ENCODE measurements at regions of chr1 and their contacts with region 1.

Region 1: DNA sequence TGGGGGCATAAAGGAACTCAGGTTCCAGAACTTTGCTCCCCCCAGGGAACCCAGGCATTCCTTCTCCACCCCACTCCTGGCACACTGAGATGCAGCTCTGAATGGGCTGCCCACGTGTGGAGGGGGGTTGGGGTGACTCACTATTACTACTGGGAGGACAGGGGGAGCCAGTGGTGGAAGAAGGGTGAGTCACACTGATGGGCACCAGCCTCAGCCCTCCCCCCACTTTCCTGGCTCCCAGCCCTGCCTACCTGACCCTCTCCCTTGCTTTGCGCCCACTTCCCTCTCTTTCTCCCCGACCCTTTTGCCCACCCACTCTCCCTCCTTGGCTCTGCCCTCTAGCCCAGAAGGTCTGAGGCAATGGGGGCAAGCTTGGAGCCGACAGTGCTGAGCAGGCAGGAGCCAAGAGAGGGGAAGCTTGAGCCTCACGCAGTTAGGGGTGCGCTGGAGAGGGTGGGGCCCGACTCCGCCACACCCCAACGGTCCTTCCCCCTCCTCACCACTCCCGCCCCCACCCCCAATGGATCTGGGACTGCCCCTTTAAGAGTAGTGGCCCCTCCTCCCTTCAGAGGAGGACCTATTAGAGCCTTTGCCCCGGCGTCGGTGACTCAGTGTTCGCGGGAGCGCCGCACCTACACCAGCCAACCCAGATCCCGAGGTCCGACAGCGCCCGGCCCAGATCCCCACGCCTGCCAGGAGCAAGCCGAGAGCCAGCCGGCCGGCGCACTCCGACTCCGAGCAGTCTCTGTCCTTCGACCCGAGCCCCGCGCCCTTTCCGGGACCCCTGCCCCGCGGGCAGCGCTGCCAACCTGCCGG is at the start of gene LMNA:
- DNase-seq: peak; percentile 92
- H3K4me3 Mint-ChIP-seq: peak within 1 kb of the TSS; percentile 93
- H3K27ac Mint-ChIP-seq: peak within 1 kb of the TSS; percentile 87
- H3K4me1 Mint-ChIP-seq: peaks cover 23% of the 10 kb centered on the region
- H3K27me3 Mint-ChIP-seq: no peaks in the 10 kb centered on the region
- total RNA-seq, gene LMNA: 210 to 211 TPM

Region 2: GRCh38 chr1:155801149-155801548 is 313.2 kb before region 1 on chr1:
- CTCF ChIA-PET with region 1: no interaction called
- POLR2A ChIA-PET with region 1: no interaction called
- intact Hi-C with region 1: no loop called
- DNase-seq: no peak
- H3K4me3 Mint-ChIP-seq: no peak overlapping the region
- H3K27ac Mint-ChIP-seq: peak overlapping the region; percentile 52
- H3K4me1 Mint-ChIP-seq: peaks cover 5% of the 10 kb centered on the region
- H3K27me3 Mint-ChIP-seq: no peaks in the 10 kb centered on the region

Region 3: DNA sequence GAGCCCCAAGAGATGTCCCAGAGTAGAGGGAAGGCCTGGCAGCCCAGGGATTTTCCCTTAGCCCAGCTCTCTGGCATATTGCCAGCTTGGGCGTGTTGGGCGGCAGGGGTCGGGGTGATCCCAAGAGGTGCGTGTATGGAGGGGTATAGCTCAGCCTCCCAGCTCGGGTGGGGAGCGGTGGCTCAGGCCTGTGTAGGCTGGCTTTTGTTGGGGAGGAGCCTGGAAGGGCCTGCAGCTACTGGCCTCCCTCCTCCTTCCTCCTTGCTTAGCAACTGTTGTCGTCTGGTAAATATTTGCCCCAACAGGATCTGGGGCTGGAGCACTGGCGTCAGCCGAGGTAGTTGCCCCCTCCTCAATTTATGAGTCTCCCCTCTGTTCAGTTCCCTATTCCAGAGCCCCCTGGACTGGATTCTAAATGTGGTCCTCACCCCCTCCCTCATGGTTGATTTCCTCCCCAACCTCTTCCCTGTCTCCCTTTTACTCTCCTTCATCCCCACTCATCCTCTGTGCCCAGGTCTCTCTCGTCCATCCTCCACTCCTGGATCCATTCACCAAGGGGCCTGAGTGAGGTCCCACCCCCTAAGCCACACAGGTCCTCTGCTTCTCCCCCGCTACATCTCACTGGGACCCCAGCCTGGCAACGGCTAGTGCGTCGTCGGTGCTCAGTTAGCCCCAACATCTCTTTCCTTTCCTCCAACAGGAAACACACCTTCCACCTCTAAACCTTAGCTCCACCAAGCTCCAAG is 10.1 kb before region 1 on chr1:
- CTCF ChIA-PET with region 1: interaction called, 1,097 read pairs
- POLR2A ChIA-PET with region 1: interaction called, 95 read pairs
- intact Hi-C with region 1: loop called (anchors 1 kb)
- DNase-seq: peak; percentile 74
- H3K4me3 Mint-ChIP-seq: peak overlapping the region; percentile 33
- H3K27ac Mint-ChIP-seq: peak overlapping the region; percentile 93
- H3K4me1 Mint-ChIP-seq: peaks cover 66% of the 10 kb centered on the region
- H3K27me3 Mint-ChIP-seq: no peaks in the 10 kb centered on the region

Measured in activated CD4-positive, alpha-beta memory T cell treated with anti-CD3 and anti-CD28 coated beads for 36 hours (primary cell).